PC-9 (cell line): ENCODE measurements at regions of chr16 and their contacts with region 1.

Region 1: DNA sequence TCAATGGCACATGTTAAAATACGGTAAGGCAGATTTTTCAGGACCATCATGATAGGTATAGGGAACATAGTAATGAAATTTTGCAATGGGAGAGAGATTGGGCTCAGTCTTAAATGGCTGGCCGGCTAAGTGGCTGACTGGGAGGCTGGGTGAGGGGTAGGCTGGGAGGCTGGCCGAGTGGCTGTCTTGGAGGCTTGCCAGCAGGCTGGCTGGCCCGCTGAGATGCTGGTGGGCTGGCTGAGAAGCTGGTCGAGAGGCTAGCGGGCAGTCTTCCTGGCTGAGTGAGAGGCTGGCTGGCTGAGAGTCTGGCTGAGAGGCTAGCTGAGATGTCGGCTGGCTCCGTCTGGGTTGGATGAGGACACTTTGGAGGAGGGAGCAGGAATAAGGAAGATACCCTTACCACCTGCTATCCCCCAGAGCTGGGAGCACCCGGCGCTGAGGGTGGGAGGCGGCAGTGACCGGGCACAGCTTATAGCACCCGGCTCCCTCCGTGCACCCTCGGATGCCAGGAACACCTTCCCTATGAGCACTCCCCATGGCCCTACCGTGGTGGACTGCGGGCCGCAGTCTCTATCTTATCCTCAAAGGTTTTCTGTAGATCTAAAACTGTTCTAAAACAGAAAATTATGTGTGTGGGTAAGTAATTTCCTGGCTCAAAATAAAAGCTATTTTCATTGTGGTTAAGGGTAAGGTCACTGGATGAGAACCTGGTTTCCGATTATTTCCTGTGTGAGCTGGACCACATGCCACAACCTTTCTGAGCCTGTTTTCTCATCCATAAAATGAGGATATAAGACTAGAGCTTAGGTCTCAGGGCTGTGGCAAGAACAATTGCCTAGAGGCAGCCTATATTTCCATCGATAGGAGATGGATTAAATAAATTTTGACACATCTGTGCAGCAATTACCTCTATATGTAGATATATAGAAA is 34.5 kb upstream of the TMC5 start:
- DNase-seq: peak in 1 of 2 experiments; percentile 36
- H3K4me3 ChIP-seq: no peak overlapping the region
- H3K27ac ChIP-seq: peak overlapping the region; percentile 66
- H3K4me1 ChIP-seq: peaks cover 58% of the 10 kb centered on the region
- H3K27me3 ChIP-seq: no peaks in the 10 kb centered on the region
- CTCF ChIP-seq: no peak

Region 2: DNA sequence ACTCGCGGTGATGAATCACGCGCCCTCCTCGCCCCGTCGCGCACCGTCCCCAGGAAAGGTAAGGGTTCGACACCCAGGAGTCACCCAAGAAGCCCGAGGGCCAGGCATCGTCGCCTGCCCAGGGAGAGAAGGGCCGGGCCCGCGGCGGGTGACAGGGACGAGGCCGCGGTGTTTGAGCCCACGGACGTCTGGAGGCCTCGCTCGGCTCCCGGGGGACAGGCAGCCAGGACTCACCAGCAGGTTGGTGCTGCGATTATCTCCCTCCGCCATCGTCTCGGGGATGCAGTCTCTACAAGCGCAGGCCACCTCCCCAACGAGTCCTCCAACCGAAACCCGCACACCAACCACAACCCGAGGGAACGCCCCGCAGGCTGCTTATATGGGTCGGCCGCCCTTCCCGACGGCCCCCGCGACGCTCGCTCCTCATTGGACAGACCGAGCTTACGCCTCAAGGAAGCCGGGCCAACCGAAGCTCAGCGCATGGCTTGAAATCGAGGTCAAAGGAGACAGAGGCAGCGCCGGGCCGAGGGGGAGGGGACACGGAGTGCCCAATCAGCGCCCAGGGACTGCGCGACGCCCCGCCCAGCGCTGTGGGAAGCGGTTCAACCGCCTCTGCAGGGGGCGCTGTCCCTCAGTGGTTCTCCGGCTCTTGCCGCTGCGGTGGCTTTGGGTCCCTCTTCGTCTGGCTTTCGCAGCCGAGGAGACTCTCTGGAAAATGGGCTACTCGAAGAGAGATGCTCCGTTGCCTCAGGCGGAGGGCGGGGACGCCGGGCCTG is 581.8 kb before region 1 on chr16 and contains the start of gene ARL6IP1:
- CTCF ChIA-PET with region 1: no interaction called
- POLR2A ChIA-PET with region 1: no interaction called
- intact Hi-C with region 1: loop called (anchors 2 kb)
- DNase-seq: peak; percentile 98 to 99
- H3K4me3 ChIP-seq: peak within 1 kb of the TSS; percentile 98
- H3K27ac ChIP-seq: peak within 1 kb of the TSS; percentile 85
- H3K4me1 ChIP-seq: peaks cover 48% of the 10 kb centered on the region
- H3K27me3 ChIP-seq: no peaks in the 10 kb centered on the region
- CTCF ChIP-seq: peak; percentile 91
- total RNA-seq, gene ARL6IP1: 294 and 338 TPM in 2 replicates

Region 3: GRCh38 chr16:18975109-18975508 is 408.0 kb before region 1 on chr16:
- CTCF ChIA-PET with region 1: no interaction called
- POLR2A ChIA-PET with region 1: no interaction called
- intact Hi-C with region 1: no loop called
- DNase-seq: no peak
- H3K4me3 ChIP-seq: no peak overlapping the region
- H3K27ac ChIP-seq: no peak overlapping the region
- H3K4me1 ChIP-seq: 0 out of 2 replicates have a peak, but pooled peaks cover 3% of the 10 kb centered on the region
- H3K27me3 ChIP-seq: no peaks in the 10 kb centered on the region
- CTCF ChIP-seq: no peak

Region 4: DNA sequence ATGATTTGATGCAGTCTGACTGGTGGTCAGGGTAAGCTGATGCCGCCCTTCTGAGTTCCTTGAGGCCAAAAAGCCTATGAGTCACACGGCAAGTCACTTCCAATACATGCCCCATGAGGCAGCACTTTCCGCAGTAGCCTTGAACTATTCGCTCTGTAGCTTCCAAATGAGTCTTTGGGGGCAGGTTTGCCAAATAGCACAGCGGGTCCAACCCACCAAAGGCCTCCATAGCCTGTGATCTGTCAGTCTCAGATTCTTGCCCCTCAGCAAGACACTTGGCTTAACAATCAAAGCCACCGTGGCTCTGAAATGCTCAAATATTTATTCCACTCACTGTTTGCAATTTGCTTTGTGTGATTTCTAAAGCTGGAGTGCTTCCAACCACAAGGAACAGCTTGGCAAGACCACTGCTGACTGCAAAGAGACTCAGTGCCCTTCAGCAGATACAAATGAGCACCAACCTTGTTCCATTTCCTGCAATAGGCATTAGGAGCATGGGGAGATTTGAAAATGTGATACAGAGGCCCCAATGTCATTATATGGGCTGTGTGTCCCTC is 52.2 kb before region 1 on chr16:
- CTCF ChIA-PET with region 1: no interaction called
- POLR2A ChIA-PET with region 1: no interaction called
- intact Hi-C with region 1: no loop called
- DNase-seq: peak; percentile 73 to 80
- H3K4me3 ChIP-seq: no peak overlapping the region
- H3K27ac ChIP-seq: peak overlapping the region; percentile 73
- H3K4me1 ChIP-seq: peaks cover 21% of the 10 kb centered on the region
- H3K27me3 ChIP-seq: no peaks in the 10 kb centered on the region
- CTCF ChIP-seq: no peak

Region 5: GRCh38 chr16:19419691-19420060 is 36.5 kb after region 1 on chr16:
- CTCF ChIA-PET with region 1: interaction called, 25 read pairs
- POLR2A ChIA-PET with region 1: interaction called, 5 read pairs
- intact Hi-C with region 1: no loop called
- DNase-seq: peak; percentile 71 to 96
- H3K4me3 ChIP-seq: 0 out of 2 replicates have a peak overlapping the region, but pooled peaks have one; percentile 21
- H3K27ac ChIP-seq: peak overlapping the region; percentile 87
- H3K4me1 ChIP-seq: peaks cover 47% of the 10 kb centered on the region
- H3K27me3 ChIP-seq: no peaks in the 10 kb centered on the region
- CTCF ChIP-seq: no peak

Region 6: DNA sequence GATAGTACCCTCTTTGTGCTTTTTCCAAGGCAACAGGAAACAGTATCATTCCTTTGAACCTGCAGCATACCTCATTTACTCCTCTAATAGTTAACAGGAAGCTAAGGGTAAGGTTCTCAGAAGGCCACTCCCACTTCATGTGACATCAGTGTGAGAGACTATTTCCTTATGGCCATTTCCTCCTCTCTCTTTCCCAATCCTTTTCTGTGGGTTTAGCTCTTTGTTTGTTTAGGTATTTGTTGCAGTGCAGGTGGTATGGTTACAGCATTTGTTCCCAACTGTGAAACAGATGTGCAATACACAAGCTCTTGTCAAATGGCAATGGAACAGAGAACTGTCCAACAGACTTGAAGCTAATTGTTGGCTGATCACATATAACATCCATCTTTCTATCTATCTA is 49.3 kb after region 1 on chr16:
- CTCF ChIA-PET with region 1: no interaction called
- POLR2A ChIA-PET with region 1: no interaction called
- intact Hi-C with region 1: loop called (anchors 2 kb)
- DNase-seq: peak; percentile 49 to 98
- H3K4me3 ChIP-seq: no peak overlapping the region
- H3K27ac ChIP-seq: peak overlapping the region; percentile 87
- H3K4me1 ChIP-seq: peaks cover 22% of the 10 kb centered on the region
- H3K27me3 ChIP-seq: no peaks in the 10 kb centered on the region
- CTCF ChIP-seq: no peak